WTC11 (cell line): ENCODE measurements at regions of chr1 and their contacts with region 1.

Region 1: DNA sequence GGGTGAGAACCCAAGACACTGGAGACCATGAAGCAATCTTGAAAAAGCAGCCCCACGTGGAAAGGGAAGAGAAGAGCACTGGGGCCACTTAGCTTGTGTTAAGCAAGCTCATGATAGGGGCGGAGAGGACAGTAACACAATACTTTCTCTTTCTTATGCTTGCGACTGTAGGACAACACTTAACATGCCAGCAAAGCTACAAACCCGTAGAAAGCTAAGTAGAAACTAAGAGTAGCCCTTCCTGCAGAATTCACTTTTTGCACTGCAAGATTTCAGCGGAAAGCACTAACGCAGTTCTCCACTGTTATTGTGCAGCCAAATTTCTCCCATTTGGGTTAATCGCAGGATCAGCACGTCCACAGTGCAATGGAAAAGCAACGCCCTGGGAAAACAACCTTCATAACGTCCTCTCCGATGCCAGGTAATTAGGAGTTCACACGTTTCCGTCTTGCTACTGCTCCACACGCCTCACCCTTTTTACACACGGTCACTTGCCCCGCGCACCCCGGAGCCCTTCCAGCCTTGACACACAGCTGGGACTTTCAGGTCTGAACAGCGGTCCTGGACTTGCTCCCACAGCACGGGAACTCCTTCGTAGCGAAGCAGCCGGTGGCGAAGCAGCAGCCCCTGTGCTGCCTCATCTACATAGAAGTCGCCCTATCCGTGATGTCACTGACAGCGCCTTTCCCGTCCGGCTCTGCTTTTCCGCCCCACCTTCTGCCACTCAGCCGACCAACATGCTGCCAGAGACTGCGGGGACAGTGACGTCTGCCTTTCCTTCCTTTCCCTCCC is 148.6 kb downstream of the PPIAL4G start:
- DNase-seq: peak; percentile 86
- ATAC-seq: peak; percentile 87
- H3K4me3 Mint-ChIP-seq: peak overlapping the region; percentile 96
- H3K27ac Mint-ChIP-seq: peak overlapping the region; percentile 100
- H3K4me1 Mint-ChIP-seq: peaks cover 23% of the 10 kb centered on the region
- H3K27me3 Mint-ChIP-seq: peaks cover 5% of the 10 kb centered on the region
- CTCF ChIP-seq: no peak

Region 2: GRCh38 chr1:148296524-148296923 is 38.0 kb before region 1 on chr1:
- CTCF ChIA-PET with region 1: no interaction called
- POLR2A ChIA-PET with region 1: no interaction called
- DNase-seq: no peak
- ATAC-seq: no peak
- H3K4me3 Mint-ChIP-seq: no peak overlapping the region
- H3K27ac Mint-ChIP-seq: no peak overlapping the region
- H3K4me1 Mint-ChIP-seq: no peaks in the 10 kb centered on the region
- H3K27me3 Mint-ChIP-seq: peaks cover 15% of the 10 kb centered on the region; the same call in 1 of the 2 replicates
- CTCF ChIP-seq: no peak

Region 3: GRCh38 chr1:148307583-148308190 is 26.8 kb before region 1 on chr1:
- CTCF ChIA-PET with region 1: no interaction called
- POLR2A ChIA-PET with region 1: interaction called, 12 read pairs
- DNase-seq: no peak
- ATAC-seq: no peak
- H3K4me3 Mint-ChIP-seq: no peak overlapping the region
- H3K27ac Mint-ChIP-seq: no peak overlapping the region
- H3K4me1 Mint-ChIP-seq: peaks cover 30% of the 10 kb centered on the region
- H3K27me3 Mint-ChIP-seq: peaks cover 65% of the 10 kb centered on the region
- CTCF ChIP-seq: no peak

Region 4: GRCh38 chr1:148318123-148318903 is 16.2 kb before region 1 on chr1:
- CTCF ChIA-PET with region 1: interaction called, 4 read pairs
- POLR2A ChIA-PET with region 1: interaction called, 13 read pairs
- DNase-seq: peak; percentile 48
- ATAC-seq: peak; percentile 76
- H3K4me3 Mint-ChIP-seq: peak overlapping the region; percentile 85
- H3K27ac Mint-ChIP-seq: peak overlapping the region; percentile 15; the same call in 1 of the 2 replicates
- H3K4me1 Mint-ChIP-seq: peaks cover 16% of the 10 kb centered on the region
- H3K27me3 Mint-ChIP-seq: peaks cover 61% of the 10 kb centered on the region
- CTCF ChIP-seq: no peak

Region 5: GRCh38 chr1:148372731-148373130 is 38.2 kb after region 1 on chr1:
- CTCF ChIA-PET with region 1: no interaction called
- POLR2A ChIA-PET with region 1: no interaction called
- DNase-seq: no peak
- ATAC-seq: no peak
- H3K4me3 Mint-ChIP-seq: no peak overlapping the region
- H3K27ac Mint-ChIP-seq: 0 out of 2 replicates have a peak overlapping the region, but pooled peaks have one; percentile 71
- H3K4me1 Mint-ChIP-seq: peaks cover 7% of the 10 kb centered on the region; the same call in 1 of the 2 replicates
- H3K27me3 Mint-ChIP-seq: no peaks in the 10 kb centered on the region; the same call in 1 of the 2 replicates
- CTCF ChIP-seq: no peak